GM10248 (cell line): ENCODE measurements at regions of chr6 and their contacts with region 1.

Region 1: DNA sequence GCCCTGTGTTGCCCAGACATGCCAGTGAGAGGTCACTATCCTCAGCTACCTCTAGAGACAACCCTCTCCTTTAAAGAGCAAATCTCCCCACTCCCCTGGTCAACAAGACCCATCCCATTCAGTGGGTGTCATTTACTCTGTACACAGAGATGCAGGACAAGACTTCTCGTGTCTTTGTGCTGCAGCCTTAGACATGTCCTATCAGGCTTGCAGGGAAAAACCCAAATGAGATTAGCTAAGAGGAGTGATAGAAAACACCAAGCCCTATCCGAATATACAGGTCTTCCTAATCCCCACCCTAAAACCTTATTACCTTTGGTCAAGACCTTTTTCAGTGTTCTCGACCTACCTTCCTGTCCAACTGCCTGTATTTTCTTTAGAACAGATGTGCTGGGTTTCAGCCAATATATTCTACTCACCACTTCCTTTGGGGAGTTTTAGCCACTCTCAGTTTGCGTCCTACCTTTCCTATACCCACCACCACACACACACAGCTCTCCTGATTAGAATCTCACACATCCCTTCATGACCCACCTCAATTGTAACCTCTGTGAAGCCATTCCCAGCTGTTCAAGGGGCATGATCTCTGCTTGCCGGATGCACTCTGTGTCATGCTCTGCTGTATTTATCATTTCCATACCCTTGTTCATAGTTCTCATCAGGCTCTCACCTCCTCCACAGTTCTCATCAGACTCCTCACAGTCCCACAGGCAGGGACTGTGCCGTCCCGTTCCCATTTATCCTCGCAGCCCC is 39.7 kb downstream of the TRAM2 start:
- DNase-seq: peak; percentile 38
- CTCF ChIP-seq: no peak

Region 2: GRCh38 chr6:52514514-52514913 is 22.7 kb before region 1 on chr6:
- CTCF ChIA-PET with region 1: interaction called, 11 read pairs
- POLR2A ChIA-PET with region 1: no interaction called
- DNase-seq: no peak
- CTCF ChIP-seq: no peak

Region 3: GRCh38 chr6:52522151-52522626 is 15.0 kb before region 1 on chr6:
- CTCF ChIA-PET with region 1: interaction called, 20 read pairs
- POLR2A ChIA-PET with region 1: no interaction called
- DNase-seq: no peak
- CTCF ChIP-seq: no peak